Activated naive CD4-positive, alpha-beta T cell treated with anti-CD3 and anti-CD28 coated beads for 36 hours (primary cell): ENCODE measurements at regions of chr5 and their contacts with region 1.

Region 1: DNA sequence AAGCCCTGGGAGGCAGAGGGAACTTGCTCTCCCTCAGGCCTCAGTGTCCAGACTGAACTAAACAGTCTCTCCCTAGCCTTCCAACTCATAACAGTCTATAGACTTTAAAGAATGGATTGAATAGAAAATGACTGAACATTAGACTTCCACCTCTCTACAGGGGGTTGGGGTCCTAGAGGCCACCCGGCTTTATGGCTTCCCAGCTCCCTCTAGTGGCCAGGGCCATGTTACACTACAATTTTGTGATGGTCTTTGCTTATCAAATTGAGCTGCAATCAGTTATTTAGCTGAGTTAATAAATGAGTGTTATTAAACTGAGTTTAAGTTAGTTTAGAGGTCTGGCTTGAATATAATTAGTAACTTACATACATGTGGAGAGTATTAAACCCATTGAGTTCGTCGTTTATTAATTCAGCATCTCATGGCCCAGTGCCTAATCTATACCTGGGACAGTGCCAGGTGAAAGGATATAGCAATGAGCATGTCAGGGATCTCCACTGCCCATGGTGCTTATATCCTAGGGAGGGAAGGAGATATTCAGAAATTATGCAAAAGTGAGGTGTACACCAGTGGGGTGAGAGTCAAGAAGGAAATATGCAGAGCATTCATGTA is 105.2 kb downstream of the SH3TC2 start:
- DNase-seq: peak; percentile 66
- H3K4me3 Mint-ChIP-seq: no peak overlapping the region
- H3K27ac Mint-ChIP-seq: no peak overlapping the region
- H3K4me1 Mint-ChIP-seq: no peaks in the 10 kb centered on the region
- H3K27me3 Mint-ChIP-seq: no peaks in the 10 kb centered on the region

Region 2: DNA sequence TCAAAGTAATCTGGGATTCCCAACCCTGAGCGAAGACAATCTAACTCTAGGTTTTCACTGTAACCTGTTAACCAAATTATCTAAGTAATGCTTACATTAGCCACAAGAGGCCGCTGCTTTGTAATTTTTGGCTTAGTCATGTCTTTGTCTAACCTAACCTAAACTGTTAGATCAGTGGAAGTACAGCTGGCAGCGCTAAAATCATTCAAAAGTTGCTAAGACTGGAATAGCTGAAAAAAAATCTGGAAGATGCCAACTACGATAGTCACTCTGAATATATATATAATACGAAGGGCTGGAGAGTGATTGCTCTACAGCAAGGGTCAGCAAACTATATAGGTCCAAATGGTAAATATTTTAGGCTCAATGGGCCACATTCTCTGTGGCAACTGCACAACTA is 513.7 kb before region 1 on chr5:
- CTCF ChIA-PET with region 1: no interaction called
- intact Hi-C with region 1: loop called (anchors 5 kb)
- DNase-seq: peak; percentile 67
- H3K4me3 Mint-ChIP-seq: no peak overlapping the region
- H3K27ac Mint-ChIP-seq: no peak overlapping the region
- H3K4me1 Mint-ChIP-seq: no peaks in the 10 kb centered on the region
- H3K27me3 Mint-ChIP-seq: no peaks in the 10 kb centered on the region

Region 3: DNA sequence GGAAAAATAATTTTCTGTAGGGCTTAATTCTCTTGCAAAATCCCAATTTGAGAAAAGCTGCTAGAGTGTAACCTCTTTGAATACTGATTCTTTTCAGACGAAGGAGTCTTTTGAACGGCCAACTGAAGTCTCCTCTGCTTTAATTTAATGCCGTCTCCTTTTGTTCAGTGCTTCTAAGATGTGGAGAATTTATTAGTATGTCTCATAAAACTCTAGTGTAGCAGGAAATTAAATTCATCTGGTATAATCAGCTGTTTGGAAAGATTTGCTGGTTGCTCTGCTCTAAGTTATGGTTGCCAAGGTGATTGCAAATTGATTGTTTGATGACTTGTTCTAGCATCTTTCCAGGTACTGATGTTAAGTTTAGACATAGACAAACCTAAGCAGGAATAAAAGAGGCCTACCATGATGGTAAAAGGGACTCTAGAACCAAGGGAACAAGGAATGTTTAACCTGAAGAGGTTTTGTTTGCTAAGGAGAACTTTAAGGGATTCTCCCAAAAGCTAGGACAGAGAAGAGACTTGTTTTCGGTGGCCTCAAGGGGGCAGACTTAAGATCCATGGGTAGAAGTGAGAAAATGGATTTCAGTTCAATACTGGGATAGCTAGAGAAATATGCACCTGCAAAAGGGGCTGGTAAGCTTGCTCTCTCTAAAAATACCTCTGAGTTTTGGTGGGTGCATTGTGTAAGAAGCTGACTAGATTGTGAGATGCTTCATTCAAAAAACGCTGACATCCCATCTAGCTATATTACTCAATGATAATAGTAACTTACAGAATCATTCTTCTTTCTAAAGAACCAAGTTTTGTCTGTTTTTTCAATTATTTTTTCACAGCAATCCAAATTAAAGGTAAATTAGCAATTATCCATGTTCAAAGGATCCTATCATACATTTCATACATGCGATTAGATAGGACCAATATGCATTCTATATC is 137.0 kb before region 1 on chr5:
- CTCF ChIA-PET with region 1: interaction called, 9 read pairs
- intact Hi-C with region 1: loop called (anchors 2 kb)
- DNase-seq: no peak
- H3K4me3 Mint-ChIP-seq: no peak overlapping the region
- H3K27ac Mint-ChIP-seq: no peak overlapping the region
- H3K4me1 Mint-ChIP-seq: peaks cover 5% of the 10 kb centered on the region
- H3K27me3 Mint-ChIP-seq: peaks cover 18% of the 10 kb centered on the region

Region 4: GRCh38 chr5:148912714-148913398 is 44.8 kb before region 1 on chr5:
- CTCF ChIA-PET with region 1: interaction called, 6 read pairs
- intact Hi-C with region 1: loop called (anchors 2 kb)
- DNase-seq: no peak
- H3K4me3 Mint-ChIP-seq: no peak overlapping the region
- H3K27ac Mint-ChIP-seq: no peak overlapping the region
- H3K4me1 Mint-ChIP-seq: no peaks in the 10 kb centered on the region
- H3K27me3 Mint-ChIP-seq: peaks cover 10% of the 10 kb centered on the region

Region 5: DNA sequence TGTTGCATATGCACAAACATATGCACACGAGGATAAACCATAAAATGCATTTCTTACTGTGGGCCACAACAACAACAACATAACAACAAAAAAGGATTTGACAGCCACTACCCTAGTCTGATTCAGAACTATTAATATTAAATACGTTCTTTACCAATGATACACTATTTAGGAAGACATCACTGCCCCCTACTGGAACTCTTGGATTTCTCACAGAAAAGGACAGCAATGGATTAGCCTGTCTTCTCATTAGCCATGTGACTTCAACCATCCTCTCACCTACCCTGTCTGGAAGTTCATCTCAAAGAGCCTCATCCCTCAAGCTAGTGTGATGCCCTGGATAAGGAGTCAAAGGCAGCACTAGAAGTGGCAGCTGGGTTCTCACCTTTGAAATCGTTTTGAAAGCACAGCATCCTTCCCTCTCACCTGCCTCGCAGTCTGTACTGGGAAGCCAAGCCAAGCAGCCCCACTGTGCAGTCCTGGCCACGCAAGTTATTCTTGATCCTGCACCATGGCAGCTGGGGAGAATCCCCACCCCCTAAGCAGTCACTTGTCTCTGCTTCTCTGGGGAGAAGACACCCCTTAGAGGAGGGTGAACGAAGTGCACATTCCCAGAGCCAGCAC is 40.6 kb after region 1 on chr5:
- CTCF ChIA-PET with region 1: interaction called, 6 read pairs
- intact Hi-C with region 1: loop called (anchors 5 kb)
- DNase-seq: peak; percentile 37
- H3K4me3 Mint-ChIP-seq: no peak overlapping the region
- H3K27ac Mint-ChIP-seq: no peak overlapping the region
- H3K4me1 Mint-ChIP-seq: no peaks in the 10 kb centered on the region
- H3K27me3 Mint-ChIP-seq: peaks cover 28% of the 10 kb centered on the region

Region 6: GRCh38 chr5:149128023-149128875 is 170.6 kb after region 1 on chr5:
- CTCF ChIA-PET with region 1: no interaction called
- intact Hi-C with region 1: no loop called
- DNase-seq: peak; percentile 38
- H3K4me3 Mint-ChIP-seq: no peak overlapping the region
- H3K27ac Mint-ChIP-seq: no peak overlapping the region
- H3K4me1 Mint-ChIP-seq: no peaks in the 10 kb centered on the region
- H3K27me3 Mint-ChIP-seq: no peaks in the 10 kb centered on the region